ENCODE measurements at regions of chr20 and their contacts with region 1.

Region 1: DNA sequence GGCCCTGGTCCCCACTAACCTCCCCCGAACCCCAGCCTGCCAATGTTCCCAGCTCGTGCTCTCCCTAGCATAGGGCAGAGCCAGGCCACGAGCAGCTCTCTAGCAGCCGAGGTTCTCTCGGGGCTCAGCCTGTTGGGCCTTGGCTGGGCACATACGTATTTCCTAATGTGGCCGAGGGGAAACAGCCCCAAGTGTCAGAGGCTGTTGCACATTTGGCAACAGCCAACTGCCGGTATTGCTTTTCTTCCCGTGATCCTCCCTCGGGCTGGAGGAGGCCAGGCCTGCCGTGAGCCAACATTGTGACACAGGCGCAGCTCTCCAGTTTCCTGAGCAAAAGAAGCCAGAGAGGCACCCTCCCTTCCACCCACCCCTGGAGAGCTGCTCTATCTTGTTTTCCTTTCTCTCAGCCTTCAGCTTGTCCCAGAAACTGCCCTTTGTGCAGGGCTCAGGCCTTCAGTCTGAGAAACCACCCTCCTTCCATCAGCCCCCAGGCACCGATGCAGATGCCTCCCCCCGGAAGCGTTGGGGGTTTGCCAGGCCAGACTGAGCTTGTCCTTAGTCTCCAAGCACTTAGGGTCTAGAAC is 5.2 kb upstream of the BPI start:
- DNase-seq: peak; percentile 70
- H3K4me3 ChIP-seq: no peak overlapping the region
- H3K27ac ChIP-seq: peak overlapping the region; percentile 41 to 79
- H3K4me1 ChIP-seq: no peaks in the 10 kb centered on the region
- H3K27me3 ChIP-seq: no peaks in the 10 kb centered on the region
- CTCF ChIP-seq: no peak
- POLR2A ChIP-seq: no peak

Region 2: DNA sequence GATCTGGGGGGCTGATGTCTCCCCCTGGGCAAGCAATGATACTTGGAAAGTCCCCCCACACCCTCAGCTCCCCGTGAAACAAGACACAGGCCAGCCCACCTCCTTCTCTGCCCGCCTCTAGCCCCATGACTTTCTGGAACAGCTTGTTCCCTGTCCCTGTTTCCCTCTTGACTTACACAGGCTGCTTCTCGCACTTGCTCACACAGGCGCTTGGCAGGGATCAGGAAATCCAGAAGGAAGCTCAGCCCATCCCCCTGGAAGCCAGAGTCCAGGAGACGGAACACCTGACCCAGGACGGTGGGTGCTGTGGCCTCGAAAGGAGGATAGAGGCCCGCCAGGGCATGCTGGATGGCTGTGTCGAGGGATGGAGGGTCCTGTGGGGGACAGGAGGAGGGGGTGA is 53.0 kb before region 1 on chr20:
- intact Hi-C with region 1: loop called (anchors 2 kb)
- DNase-seq: peak; percentile 18
- H3K4me3 ChIP-seq: no peak overlapping the region
- H3K27ac ChIP-seq: peak overlapping the region; percentile 64 to 77
- H3K4me1 ChIP-seq: no peaks in the 10 kb centered on the region
- H3K27me3 ChIP-seq: no peaks in the 10 kb centered on the region
- CTCF ChIP-seq: no peak
- POLR2A ChIP-seq: no peak

Measured in prostate gland (tissue), 2 donors.